ENCODE measurements at regions of chr1 and their contacts with region 1.

Region 1: GRCh38 chr1:192474080-192474683 is 101.4 kb upstream of the RGS1 start:
- DNase-seq: no peak
- H3K4me3 ChIP-seq: no peak overlapping the region
- H3K27ac ChIP-seq: no peak overlapping the region
- H3K4me1 ChIP-seq: peaks cover 0 to 4% (median 0%) of the 10 kb centered on the region in 6 donors
- H3K27me3 ChIP-seq: peaks cover 0 to 43% (median 5%) of the 10 kb centered on the region in 7 donors
- CTCF ChIP-seq: peak in 8 of 11 experiments; percentile 47 to 69 (median 62)
- POLR2A ChIP-seq: no peak

Region 2: GRCh38 chr1:192580351-192580962 is 106.3 kb after region 1 on chr1:
- intact Hi-C with region 1: no loop called
- DNase-seq: no peak
- H3K4me3 ChIP-seq: peak overlapping the region in 1 of 8 donors; percentile 61
- H3K27ac ChIP-seq: no peak overlapping the region
- H3K4me1 ChIP-seq: peaks cover 0 to 5% (median 0%) of the 10 kb centered on the region in 6 donors
- H3K27me3 ChIP-seq: no peaks in the 10 kb centered on the region
- CTCF ChIP-seq: peak in 4 of 11 experiments; percentile 18 to 39 (median 27)
- POLR2A ChIP-seq: peak in 1 of 3 donors; percentile 41

Region 3: DNA sequence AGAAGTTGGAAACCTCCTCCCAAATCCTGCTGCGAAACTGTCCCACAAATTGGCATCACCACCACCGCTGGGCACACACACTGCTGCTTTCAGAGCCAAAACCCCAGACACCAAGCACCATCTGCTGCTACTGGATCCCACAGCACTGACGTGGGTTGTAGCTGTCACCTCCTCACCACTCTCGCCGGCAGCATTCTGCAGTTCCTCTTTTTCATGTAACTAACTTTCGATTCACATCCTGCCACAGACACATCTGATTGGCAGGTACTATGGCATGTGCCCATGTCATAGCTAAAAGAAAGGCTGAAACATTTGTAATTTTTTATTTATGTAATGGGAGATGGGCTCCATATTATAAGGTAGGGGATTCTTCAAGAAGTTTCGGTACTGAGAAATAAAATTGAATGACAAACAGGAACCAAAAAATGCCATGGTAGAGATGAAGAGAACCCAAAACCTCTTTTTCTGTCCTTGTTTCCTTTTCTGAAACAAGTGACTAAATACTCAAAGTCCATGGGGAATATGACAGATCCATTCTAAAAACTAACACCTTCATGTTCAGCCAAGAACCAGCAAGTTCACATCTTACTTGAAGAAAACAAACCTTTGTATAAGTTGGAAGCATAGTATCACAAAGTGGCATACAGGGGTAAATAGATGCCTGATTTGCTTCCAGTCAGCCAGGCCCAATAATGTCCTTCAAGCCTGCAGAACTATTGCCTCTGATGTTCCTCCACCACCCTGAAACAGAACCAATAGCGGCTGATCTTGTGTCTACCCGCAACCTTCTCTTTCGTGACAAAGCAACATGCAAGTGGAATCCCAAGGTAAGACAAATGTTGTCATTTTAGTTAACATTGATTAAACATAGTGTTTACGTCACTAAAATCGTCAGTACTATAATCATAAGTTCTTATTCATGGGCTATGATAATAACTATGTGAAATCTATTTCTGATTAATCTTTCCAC is 135.2 kb after region 1 on chr1:
- intact Hi-C with region 1: loop called (anchors 5 kb)
- DNase-seq: peak; percentile 92
- H3K4me3 ChIP-seq: peak overlapping the region in 1 of 8 donors; percentile 23
- H3K27ac ChIP-seq: peak overlapping the region in 4 of 8 donors; percentile 16 to 52 (median 48)
- H3K4me1 ChIP-seq: peaks cover 0 to 29% (median 20%) of the 10 kb centered on the region in 6 donors
- H3K27me3 ChIP-seq: no peaks in the 10 kb centered on the region
- CTCF ChIP-seq: no peak
- POLR2A ChIP-seq: no peak

Measured in spleen (tissue), 13 donors.